ENCODE measurements at regions of chr17 and their contacts with region 1.

Region 1: DNA sequence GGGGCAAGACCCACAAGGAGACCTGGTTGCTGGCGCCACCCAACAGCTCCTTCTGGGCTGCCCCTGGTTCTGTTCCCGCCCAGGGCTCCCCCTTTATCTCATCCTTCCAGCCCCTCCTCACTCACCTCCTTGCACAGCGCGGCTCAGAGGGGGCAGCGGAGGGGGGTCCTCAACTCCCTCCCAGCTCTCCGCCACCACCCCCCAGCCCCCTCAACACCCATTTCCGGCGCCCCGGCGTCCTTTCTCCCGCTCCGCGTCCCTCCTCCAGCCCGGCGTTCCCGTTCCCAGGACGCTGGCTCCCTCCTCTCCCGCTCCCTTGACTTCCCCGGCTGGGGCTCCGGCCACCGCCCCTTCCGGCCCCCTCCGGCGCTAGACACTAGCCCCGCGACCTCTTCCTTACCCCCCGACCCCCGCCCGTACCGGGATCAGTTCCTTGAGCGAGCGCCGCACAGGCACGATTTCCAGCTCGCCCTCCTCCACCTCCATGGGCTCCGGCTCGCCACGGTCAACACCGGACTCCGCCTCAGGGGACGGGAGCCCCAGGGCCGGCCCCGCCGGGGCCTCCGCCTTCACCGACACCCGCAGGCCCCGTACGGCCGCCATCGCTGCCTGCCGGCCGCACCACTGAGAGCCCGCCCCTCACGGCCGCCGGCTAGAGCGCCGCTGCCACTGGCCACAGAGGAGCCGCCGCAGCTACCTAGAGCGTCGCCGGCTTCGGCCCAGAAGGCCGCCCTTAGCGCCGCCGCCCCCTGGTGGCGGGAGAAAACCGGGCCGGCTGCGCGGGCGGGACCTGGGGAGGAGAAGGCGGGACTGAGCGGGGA is at the start of gene NCBP3:
- DNase-seq: peak; percentile 89
- H3K4me3 Mint-ChIP-seq: peak within 1 kb of the TSS; percentile 96
- H3K27ac Mint-ChIP-seq: peak within 1 kb of the TSS; percentile 95
- H3K4me1 Mint-ChIP-seq: peaks cover 20% of the 10 kb centered on the region
- H3K27me3 Mint-ChIP-seq: peaks cover 9% of the 10 kb centered on the region
- total RNA-seq, gene NCBP3: 49.2 and 57.2 TPM in 2 replicates

Region 2: GRCh38 chr17:3773511-3773910 is 72.3 kb before region 1 on chr17:
- intact Hi-C with region 1: no loop called
- DNase-seq: no peak
- H3K4me3 Mint-ChIP-seq: no peak overlapping the region
- H3K27ac Mint-ChIP-seq: no peak overlapping the region
- H3K4me1 Mint-ChIP-seq: peaks cover 19% of the 10 kb centered on the region
- H3K27me3 Mint-ChIP-seq: peaks cover 2% of the 10 kb centered on the region

Region 3: DNA sequence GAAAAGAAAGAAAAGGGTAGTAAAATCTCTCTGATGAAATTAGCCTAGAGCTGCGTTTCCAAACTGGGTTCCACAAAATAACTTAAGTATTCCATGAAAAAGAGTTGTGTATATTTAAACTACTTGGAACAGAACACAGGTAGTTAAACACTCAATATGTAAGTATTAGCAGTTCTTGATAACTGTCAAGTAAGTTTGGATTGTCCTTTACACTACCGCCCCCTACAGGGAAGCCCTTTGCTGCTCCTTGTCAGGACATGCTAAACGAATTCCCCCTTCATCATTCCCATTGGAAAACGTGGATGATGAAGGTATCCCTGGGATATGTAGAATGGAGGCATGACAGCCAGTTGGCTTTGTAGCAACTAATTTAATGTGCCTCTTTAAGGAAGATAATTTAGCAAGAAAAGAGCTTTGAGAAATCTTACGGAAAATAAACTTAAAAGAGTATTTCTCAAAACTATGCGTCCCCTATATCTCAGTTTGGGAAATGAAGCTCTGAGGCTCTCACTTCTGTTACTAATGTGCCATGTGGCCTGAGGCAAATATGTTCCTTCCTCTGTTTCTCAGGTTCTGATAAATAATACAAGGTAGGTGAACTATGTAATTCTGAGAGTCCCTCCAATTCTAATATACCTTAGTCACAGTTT is 18.6 kb before region 1 on chr17:
- intact Hi-C with region 1: no loop called
- DNase-seq: peak; percentile 36
- H3K4me3 Mint-ChIP-seq: no peak overlapping the region
- H3K27ac Mint-ChIP-seq: no peak overlapping the region
- H3K4me1 Mint-ChIP-seq: peaks cover 28% of the 10 kb centered on the region
- H3K27me3 Mint-ChIP-seq: no peaks in the 10 kb centered on the region

Region 4: DNA sequence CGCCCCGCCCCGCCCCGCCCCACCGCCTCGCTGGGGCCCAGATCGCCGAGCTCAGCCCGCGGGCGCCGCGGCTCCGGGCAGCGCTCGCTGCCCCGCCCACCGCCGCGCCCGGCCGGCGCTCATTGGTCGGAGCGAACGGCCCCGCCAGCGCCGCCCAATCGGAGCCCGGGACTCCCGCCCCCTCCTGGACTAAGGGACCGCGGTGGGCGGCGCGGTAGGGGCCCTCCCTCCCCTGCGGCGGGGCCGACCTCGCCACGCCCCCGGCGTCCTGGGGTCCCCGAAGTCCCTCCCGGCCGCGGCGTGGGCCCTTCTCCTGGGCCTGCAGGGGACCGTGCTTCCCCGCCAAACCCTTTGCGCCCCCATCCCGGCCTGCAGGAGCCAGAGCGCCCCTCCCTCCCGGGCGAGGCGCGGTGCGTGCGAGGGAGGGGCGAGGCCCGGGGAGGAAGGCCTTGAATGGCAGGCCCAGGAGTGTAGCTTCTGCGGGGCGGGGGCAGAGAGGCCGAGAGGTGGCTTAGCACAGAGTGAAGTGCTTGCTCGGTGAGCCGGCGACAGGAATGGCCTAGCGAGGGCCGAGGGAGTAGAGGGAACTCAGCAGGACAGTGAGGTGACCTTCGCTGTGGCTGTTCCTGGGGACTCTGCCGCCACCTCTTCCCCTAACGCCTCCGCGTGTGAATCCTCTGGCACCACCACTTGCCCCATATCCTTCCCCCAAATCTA is 47.3 kb after region 1 on chr17 and contains the start of gene CAMKK1:
- intact Hi-C with region 1: loop called (anchors 2 kb)
- DNase-seq: peak; percentile 88
- H3K4me3 Mint-ChIP-seq: peak within 1 kb of the TSS; percentile 79
- H3K27ac Mint-ChIP-seq: peak within 1 kb of the TSS; percentile 79
- H3K4me1 Mint-ChIP-seq: peaks cover 23% of the 10 kb centered on the region
- H3K27me3 Mint-ChIP-seq: peaks cover 6% of the 10 kb centered on the region
- total RNA-seq, gene CAMKK1: 6.5 and 6.6 TPM in 2 replicates

Region 5: DNA sequence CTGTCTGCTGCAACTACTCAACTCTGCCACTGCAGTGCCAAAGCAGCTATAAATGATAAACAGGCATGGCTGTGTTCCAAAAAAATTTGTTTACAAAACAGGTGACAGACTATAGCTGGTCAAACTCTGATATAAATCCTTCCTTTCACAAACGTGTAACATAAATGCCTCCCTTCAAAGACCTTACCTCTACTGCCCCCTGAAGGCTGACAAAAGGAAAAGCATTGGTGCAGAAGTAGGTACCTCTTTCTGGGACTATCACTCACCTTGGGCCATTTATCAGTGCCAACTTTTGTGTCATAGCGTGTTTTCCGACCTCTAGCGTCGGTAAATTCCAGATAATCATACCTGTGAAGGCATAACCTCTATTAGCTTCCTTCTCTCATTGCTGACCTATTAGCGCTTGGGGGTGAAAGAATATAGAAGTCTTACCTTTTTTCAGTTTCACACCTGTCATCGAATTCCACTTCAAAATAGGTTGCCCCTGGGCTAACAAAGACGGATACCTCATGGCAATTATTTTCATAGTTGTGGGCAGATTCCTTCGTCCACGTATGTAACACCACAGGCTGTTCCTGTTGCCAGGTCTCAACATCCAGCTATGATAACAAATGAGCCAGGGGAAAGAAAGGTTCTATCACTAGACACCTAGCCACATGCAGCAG is 229.1 kb after region 1 on chr17:
- intact Hi-C with region 1: loop called (anchors 10 kb)
- DNase-seq: no peak
- H3K4me3 Mint-ChIP-seq: no peak overlapping the region
- H3K27ac Mint-ChIP-seq: no peak overlapping the region
- H3K4me1 Mint-ChIP-seq: no peaks in the 10 kb centered on the region
- H3K27me3 Mint-ChIP-seq: no peaks in the 10 kb centered on the region

Measured in activated T-helper 2 cell treated with anti-CD3 and anti-CD28 coated beads, Interferon-gamma antibody, Interleukin-2, Interleukin-4, amounts not matched to agents 10 μg/mL and 5 μg/mL and 100 μg/mL, durations not matched to agents 14 hours and 24 hours and 36 hours (primary cell).